ENCODE measurements at regions of chr2 and their contacts with region 1.

Region 1: DNA sequence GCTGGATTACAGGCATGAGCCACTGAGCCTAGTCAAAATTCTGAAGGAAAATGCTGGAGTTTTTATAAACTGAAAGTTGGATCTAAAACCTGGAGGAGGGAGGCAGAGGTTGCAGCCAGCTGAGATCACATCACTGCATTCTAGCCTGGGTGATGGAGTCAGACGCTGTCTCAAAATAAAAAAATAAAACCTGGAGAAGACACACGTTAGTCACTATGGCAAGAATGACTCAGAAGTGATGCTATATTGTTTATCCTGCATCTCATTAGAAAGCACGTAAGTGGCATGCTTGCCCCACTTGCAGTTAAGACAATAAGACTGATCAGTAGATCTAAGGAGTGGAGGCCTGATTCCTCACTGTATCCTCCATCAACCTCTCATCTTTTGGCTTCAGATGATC is 106.6 kb upstream of the STON1 start:
- DNase-seq: no peak
- H3K4me3 Mint-ChIP-seq: no peak overlapping the region
- H3K27ac Mint-ChIP-seq: no peak overlapping the region
- H3K4me1 Mint-ChIP-seq: peaks cover 21% of the 10 kb centered on the region
- H3K27me3 Mint-ChIP-seq: peaks cover 13% of the 10 kb centered on the region

Region 2: DNA sequence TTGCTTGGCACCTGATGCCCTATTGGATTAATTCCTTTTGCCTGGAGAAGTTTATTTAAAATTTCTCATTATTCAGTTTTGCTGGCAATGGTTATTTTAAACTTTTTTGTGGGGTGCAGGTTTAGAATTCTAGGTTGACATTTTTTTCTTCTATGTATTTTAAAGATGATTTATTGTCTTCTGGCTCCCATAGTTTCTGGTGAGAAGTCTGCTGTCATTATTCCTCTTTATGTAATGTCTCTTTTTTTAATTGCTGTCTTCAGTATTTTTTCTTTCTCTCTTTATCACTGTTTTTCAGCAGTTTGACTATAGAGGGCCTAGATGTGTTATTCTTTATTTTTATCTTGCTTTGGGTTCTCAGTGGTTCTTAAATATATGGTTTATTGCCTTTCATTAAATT is 75.7 kb before region 1 on chr2:
- CTCF ChIA-PET with region 1: no interaction called
- DNase-seq: no peak
- H3K4me3 Mint-ChIP-seq: no peak overlapping the region
- H3K27ac Mint-ChIP-seq: peak overlapping the region; percentile 1
- H3K4me1 Mint-ChIP-seq: peaks cover 46% of the 10 kb centered on the region
- H3K27me3 Mint-ChIP-seq: no peaks in the 10 kb centered on the region

Region 3: DNA sequence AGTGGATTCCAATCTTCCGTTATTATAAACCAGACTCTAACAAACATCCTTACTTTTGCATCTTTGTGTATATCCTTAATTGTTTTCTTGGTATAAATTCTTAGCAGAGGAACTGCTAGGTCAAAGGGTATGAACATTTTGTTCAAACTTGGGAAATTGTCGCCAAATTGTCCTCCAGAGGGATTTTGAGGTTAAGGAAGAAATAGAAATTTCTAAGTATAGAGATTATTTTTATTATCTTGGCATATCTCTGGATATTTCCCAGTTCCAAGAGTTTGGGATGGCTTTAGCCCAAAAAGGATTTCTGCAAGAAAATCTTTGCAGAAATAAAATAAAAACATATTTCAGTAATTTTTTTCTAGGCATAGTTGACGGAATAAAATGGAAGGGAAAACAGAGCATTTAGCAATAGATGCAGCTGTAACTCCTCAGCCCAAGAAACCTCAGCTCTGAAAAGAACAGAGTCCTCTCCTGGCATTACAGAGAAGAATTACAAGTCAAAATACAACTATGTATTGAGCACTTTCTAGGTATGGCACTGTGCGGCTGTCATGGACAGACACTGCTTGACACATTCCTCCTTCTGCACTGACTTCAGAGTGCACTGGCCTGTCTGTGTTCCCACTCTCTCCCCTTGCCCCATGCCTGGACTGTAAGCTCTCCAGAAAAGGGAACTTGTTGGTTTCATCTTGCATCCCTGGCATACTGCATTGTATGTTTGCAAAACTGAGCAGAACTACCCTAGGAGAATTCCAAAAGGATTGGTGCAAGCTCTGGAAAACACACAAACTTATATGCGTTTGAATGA is 10.7 kb before region 1 on chr2:
- CTCF ChIA-PET with region 1: no interaction called
- DNase-seq: no peak
- H3K4me3 Mint-ChIP-seq: no peak overlapping the region
- H3K27ac Mint-ChIP-seq: no peak overlapping the region
- H3K4me1 Mint-ChIP-seq: peaks cover 33% of the 10 kb centered on the region
- H3K27me3 Mint-ChIP-seq: peaks cover 11% of the 10 kb centered on the region

Region 4: GRCh38 chr2:48448274-48449061 is 25.1 kb after region 1 on chr2:
- CTCF ChIA-PET with region 1: interaction called, 14 read pairs
- DNase-seq: no peak
- H3K4me3 Mint-ChIP-seq: peak overlapping the region; percentile 62
- H3K27ac Mint-ChIP-seq: peak overlapping the region; percentile 97
- H3K4me1 Mint-ChIP-seq: peaks cover 63% of the 10 kb centered on the region
- H3K27me3 Mint-ChIP-seq: no peaks in the 10 kb centered on the region

Measured in activated naive CD4-positive, alpha-beta T cell treated with anti-CD3 and anti-CD28 coated beads, Interleukin-2, amount 10 ng/mL, durations not matched to agents 7 days and 5 days (primary cell).